PC-9 (cell line): ENCODE measurements at regions of chr11 and their contacts with region 1.

Region 1: DNA sequence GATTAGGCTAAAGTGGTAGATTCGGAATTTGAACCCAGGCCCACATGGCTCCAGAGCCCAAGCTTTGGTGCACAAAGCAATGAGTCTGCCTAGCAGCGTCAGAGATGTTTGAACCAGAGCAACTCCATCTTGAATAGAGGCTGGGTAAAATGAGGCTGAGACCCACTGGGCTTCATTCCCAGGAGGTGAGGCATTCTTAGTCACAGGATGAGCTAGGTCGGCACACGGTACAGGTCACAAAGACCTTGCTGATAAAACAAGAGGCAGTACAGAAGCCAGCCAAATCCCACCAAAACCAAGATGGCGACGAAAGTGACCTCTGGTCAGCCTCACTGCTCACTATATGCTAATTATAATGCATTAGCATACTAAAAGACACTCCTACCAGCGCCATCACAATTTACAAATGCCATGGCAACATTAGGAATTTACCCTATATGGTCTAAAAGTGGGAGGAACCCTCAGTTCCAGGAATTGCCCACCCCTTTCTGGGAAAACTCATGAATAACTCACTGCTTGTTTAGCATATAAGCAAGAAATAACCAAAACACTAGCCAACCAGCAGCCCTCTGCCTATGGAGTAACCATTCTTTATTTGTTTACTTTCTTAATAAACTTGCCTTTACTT is 40.3 kb upstream of the DAGLA start:
- DNase-seq: no peak
- H3K4me3 ChIP-seq: no peak overlapping the region
- H3K27ac ChIP-seq: no peak overlapping the region
- H3K4me1 ChIP-seq: no peaks in the 10 kb centered on the region
- H3K27me3 ChIP-seq: no peaks in the 10 kb centered on the region
- CTCF ChIP-seq: no peak

Region 2: GRCh38 chr11:60870733-60871377 is 769.1 kb before region 1 on chr11:
- CTCF ChIA-PET with region 1: interaction called, 15 read pairs
- POLR2A ChIA-PET with region 1: no interaction called
- intact Hi-C with region 1: no loop called
- DNase-seq: no peak
- H3K4me3 ChIP-seq: no peak overlapping the region
- H3K27ac ChIP-seq: no peak overlapping the region
- H3K4me1 ChIP-seq: 0 out of 2 replicates have a peak, but pooled peaks cover 12% of the 10 kb centered on the region
- H3K27me3 ChIP-seq: no peaks in the 10 kb centered on the region
- CTCF ChIP-seq: no peak

Region 3: GRCh38 chr11:61287338-61287977 is 352.5 kb before region 1 on chr11:
- CTCF ChIA-PET with region 1: interaction called, 10 read pairs
- POLR2A ChIA-PET with region 1: no interaction called
- intact Hi-C with region 1: no loop called
- DNase-seq: no peak
- H3K4me3 ChIP-seq: no peak overlapping the region
- H3K27ac ChIP-seq: no peak overlapping the region
- H3K4me1 ChIP-seq: no peaks in the 10 kb centered on the region
- H3K27me3 ChIP-seq: no peaks in the 10 kb centered on the region
- CTCF ChIP-seq: no peak

Region 4: DNA sequence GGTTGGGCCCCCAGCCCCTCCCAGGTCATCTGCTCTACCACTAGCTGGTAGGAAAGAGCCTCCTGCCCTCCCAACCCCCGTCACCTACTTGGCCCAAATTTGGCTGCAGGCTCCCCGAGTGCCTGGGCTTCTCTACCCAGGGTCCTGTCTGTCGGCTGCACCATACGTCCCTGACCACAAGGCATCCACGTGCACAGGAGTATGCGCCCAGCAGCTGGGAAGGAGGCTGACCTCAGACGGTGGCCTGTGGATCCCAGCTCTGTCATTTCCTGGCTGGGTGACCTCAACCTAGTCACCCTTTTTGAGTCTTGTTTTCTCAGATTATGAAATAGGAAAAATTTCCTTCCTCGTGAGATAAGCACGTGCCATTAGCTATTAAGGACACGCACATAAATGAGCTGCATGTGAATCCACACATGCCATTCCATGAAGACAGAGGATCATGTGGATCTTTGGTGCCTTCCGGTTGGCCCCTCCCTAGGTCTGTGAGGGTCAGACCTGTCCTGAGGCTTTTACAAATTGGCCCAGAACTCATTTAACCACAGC is 291.9 kb before region 1 on chr11:
- CTCF ChIA-PET with region 1: no interaction called
- POLR2A ChIA-PET with region 1: no interaction called
- intact Hi-C with region 1: no loop called
- DNase-seq: no peak
- H3K4me3 ChIP-seq: no peak overlapping the region
- H3K27ac ChIP-seq: no peak overlapping the region
- H3K4me1 ChIP-seq: no peaks in the 10 kb centered on the region
- H3K27me3 ChIP-seq: no peaks in the 10 kb centered on the region
- CTCF ChIP-seq: no peak

Region 5: GRCh38 chr11:61446211-61446651 is 193.7 kb before region 1 on chr11:
- CTCF ChIA-PET with region 1: interaction called, 18 read pairs
- POLR2A ChIA-PET with region 1: no interaction called
- intact Hi-C with region 1: loop called (anchors 1 kb)
- DNase-seq: peak; percentile 82 to 90
- H3K4me3 ChIP-seq: no peak overlapping the region
- H3K27ac ChIP-seq: no peak overlapping the region
- H3K4me1 ChIP-seq: no peaks in the 10 kb centered on the region
- H3K27me3 ChIP-seq: no peaks in the 10 kb centered on the region
- CTCF ChIP-seq: peak; percentile 91